ENCODE measurements at regions of chr3 and their contacts with region 1.

Region 1: DNA sequence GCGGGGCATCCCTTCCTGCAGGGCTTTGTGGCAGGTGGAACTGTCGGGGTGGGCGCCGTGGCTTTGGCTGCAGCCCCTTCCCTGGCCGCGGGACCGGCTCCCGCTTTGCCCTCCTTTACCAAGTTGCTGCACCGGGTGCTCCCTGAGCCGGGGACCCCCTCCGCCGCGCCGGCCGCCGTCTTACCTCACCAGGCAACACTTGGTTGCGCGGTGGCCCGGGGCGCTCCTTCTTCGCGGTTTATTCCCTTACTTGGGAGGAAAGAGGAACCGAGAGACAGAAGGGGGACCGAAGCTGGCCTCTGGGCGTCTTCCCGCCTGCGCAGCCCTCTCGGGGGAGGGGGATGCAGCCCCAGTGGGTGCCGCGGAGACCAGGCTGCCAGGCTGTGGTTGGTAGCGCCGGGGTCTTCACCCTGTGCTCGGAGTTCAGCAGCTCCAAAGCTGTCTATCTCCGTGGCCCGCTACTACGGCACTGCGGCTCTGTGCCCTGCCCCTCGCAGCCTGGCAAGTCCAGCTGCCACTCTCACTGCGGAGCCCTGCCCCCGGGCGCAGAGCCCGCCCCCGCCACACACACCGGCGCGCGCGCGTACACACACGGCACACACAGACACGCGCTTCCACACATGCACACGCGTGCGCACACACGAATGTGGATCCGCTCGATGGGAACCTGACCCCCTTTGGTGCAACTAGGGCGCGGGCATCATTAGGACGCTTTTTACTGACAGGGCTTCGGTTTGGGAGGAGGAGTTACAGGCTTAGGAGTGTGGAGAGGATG is at the start of gene DGKG:
- DNase-seq: peak; percentile 92
- total RNA-seq, gene DGKG: 48.7 TPM

Region 2: DNA sequence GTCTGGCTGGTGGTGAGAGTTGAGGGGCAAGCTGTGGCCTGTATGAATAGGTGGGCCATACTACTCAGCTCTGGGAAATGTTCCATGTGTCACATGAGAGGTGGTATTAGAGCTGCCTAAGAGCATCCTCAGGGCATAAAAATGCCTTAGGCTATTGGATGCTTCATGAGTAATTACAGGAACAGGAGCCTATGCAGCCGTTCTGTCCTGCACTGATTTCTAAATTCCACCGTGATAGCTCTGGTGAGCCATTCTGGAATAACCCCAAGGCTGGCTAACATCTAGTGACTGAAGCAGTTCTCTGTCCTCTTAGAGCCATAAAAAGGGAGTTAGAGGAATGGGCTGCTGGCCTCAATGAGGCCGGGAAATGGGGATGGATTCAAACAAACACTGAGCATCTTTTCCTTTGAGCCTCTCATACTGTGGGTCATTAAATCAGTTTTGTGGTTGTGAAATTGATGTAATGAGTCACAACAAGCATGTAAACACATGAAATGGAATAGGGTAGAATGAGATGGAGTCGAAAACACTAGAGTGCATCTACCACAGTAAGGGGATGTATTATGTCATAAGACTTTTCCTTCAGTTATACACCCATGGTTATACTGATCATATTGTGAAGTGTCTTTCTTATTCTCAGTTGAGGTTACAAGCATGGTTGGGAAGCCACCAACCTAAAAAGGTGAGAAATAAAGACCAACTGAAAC is 40.9 kb before region 1 on chr3:
- intact Hi-C with region 1: loop called (anchors 5 kb)
- DNase-seq: no peak

Region 3: GRCh38 chr3:186381424-186382216 is 19.7 kb after region 1 on chr3:
- intact Hi-C with region 1: loop called (anchors 2 kb)
- DNase-seq: no peak

Region 4: DNA sequence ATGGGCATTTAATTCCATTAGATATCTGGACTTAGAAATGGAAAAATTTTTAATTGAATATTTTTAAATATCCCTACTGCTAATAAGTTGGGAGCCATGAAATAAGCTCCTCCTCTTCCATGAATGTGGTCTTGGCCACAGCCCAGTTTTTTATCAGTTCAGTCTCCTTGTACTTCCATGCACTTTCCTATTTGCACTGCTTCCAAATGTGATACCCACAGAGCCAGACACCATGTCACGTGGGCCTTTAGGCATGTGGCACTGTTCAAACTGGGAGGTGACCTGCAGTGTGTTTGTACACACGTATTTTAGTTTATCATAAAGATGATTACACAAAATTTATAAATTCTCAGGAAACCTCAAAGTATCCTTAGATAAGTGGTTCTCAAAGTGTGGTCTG is 80.2 kb after region 1 on chr3:
- intact Hi-C with region 1: loop called (anchors 5 kb)
- DNase-seq: no peak

Region 5: GRCh38 chr3:186589121-186589520 is 227.2 kb after region 1 on chr3:
- intact Hi-C with region 1: no loop called
- DNase-seq: no peak